ENCODE measurements at regions of chr1 and their contacts with region 1.

Region 1: GRCh38 chr1:200620273-200621131 is at the start of gene KIF14:
- DNase-seq: peak; percentile 63 to 92
- H3K4me3 ChIP-seq: peak within 1 kb of the TSS; percentile 84 to 94 (median 90)
- H3K27ac ChIP-seq: peak within 1 kb of the TSS; percentile 86
- H3K4me1 ChIP-seq: 0 out of 7 replicates have a peak, but pooled peaks cover 0 to 2% (median 0%) of the 10 kb centered on the region in 4 experiments
- H3K27me3 ChIP-seq: no peaks in the 10 kb centered on the region
- CTCF ChIP-seq: no peak
- EP300 ChIP-seq: peak in 1 of 2 experiments; percentile 66; a peak in 1 of 3 replicates
- POLR2A ChIP-seq: peak in 1 of 2 experiments; percentile 90; a peak in 2 of 3 replicates
- RAD21 ChIP-seq: no peak
- total RNA-seq, gene KIF14: 22.5 and 23.3 TPM in 2 replicates

Region 2: GRCh38 chr1:200473698-200474371 is 146.7 kb before region 1 on chr1:
- CTCF ChIA-PET with region 1: no interaction called
- POLR2A ChIA-PET with region 1: no interaction called
- DNase-seq: no peak
- H3K4me3 ChIP-seq: no peak overlapping the region
- H3K27ac ChIP-seq: no peak overlapping the region
- H3K4me1 ChIP-seq: no peaks in the 10 kb centered on the region
- H3K27me3 ChIP-seq: no peaks in the 10 kb centered on the region
- CTCF ChIP-seq: no peak
- EP300 ChIP-seq: no peak
- POLR2A ChIP-seq: no peak
- RAD21 ChIP-seq: no peak

Region 3: DNA sequence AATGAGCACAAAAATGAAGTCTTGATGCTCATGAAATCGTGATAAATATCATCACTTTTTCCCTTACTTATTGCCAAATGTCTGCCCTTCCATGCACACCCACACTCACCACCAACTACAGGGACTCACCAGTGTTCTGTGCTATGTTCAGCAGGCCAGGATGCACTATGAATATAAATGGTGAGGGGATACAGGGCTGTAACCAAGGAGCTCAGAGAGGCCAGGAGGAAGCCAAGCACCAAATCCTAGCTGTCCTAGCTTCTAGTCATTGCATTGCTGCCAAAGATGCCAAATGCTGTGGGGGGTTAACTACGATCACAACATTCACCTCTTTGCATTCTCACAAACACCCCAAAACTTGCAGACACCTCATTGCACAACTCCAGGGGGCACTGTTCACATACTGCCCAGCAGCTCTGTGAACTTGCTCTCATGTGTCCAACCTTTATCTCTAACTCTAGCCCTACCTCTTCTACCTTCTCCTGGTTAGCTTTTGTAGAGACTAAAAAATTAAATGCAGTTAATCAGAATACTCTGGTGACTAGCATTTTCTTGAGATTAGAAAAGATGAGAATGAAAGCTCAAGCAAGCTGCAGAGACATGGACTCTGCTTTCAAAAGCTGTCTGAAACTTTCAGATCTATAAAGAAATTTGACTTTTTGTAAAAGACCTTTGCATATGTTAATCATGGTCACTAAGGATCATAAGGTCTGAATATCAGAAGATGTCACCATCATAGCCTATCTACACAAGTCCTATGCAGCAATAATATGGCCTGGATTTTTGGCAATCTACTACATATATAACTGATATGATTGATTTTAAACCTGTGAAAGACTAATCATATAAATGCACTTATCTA is 14.0 kb after region 1 on chr1:
- CTCF ChIA-PET with region 1: interaction called, 28 read pairs
- POLR2A ChIA-PET with region 1: interaction called, 3 read pairs
- DNase-seq: no peak
- H3K4me3 ChIP-seq: no peak overlapping the region
- H3K27ac ChIP-seq: no peak overlapping the region
- H3K4me1 ChIP-seq: no peaks in the 10 kb centered on the region
- H3K27me3 ChIP-seq: no peaks in the 10 kb centered on the region
- CTCF ChIP-seq: peak; percentile 10 to 46 (median 28); a peak in 2 of 4 replicates
- EP300 ChIP-seq: no peak
- POLR2A ChIP-seq: no peak
- RAD21 ChIP-seq: peak; percentile 17 to 48; a peak in 2 of 4 replicates

Region 4: DNA sequence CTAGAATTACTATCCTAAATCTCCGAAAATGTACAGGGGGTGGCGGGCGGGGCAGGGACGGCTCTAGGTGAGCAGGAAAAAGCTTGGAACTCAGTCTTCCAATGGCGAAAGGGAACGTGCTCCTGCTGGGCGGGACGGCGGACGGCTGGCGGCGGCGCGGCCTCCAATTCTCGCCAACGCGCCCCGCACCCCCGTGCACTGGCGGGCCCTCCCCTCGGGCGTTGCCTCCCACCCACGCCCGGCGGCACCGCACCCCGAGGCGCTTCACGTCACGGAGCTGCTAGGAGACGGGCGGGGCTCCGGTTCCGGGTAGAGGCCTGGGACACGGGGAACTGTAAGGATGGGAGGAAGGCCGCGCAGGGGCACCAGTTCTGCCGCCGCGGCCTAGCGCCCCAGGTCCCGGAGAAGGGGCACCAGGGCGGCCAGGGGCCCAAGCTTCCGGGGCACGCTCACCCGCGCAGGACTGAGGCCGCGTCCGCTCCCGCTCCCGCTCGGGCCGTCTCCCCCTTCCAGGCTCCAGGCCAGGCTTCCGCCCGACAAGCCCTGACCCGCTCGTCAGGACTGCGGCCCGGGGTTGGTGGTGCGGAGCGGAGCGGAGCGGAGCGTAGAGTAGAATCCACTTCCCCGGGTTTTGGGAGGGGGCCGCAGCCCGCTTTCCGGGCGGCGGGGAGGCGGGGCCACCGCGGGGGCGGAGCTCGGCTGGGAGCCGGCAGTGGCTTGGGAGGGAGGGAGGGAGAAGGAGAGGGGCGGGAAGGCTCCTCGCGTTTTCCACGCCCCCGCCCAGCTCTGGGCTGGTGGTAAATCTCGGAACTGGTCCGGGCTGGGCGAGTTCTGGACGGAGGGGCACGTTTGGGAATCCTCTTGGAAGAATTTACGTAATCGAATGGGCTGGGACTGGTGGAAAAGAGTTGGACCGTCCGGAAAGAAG is 49.1 kb after region 1 on chr1 and contains the start of gene DDX59:
- CTCF ChIA-PET with region 1: interaction called, 14 read pairs
- POLR2A ChIA-PET with region 1: interaction called, 6 read pairs
- DNase-seq: peak; percentile 88 to 93
- H3K4me3 ChIP-seq: peak within 1 kb of the TSS; percentile 68 to 86 (median 78)
- H3K27ac ChIP-seq: peak within 1 kb of the TSS; percentile 93
- H3K4me1 ChIP-seq: peaks cover 0 to 8% (median 5%) of the 10 kb centered on the region in 4 experiments; a peak in 4 of 7 replicates
- H3K27me3 ChIP-seq: no peaks in the 10 kb centered on the region
- CTCF ChIP-seq: no peak
- EP300 ChIP-seq: no peak; a peak in 1 of 3 replicates
- POLR2A ChIP-seq: peak; percentile 81 to 89
- RAD21 ChIP-seq: no peak
- total RNA-seq, gene DDX59: 17.7 and 19.4 TPM in 2 replicates

Region 5: GRCh38 chr1:200738740-200739498 is 118.4 kb after region 1 on chr1 and contains the start of gene CAMSAP2:
- CTCF ChIA-PET with region 1: interaction called, 12 read pairs
- POLR2A ChIA-PET with region 1: interaction called, 3 read pairs
- DNase-seq: peak in 1 of 2 experiments; percentile 87
- H3K4me3 ChIP-seq: peak within 1 kb of the TSS; percentile 83 to 97 (median 94)
- H3K27ac ChIP-seq: peak within 1 kb of the TSS; percentile 86
- H3K4me1 ChIP-seq: peaks cover 0 to 12% (median 7%) of the 10 kb centered on the region in 4 experiments; a peak in 4 of 7 replicates
- H3K27me3 ChIP-seq: peaks cover 0 to 3% (median 1%) of the 10 kb centered on the region in 4 experiments; a peak in 3 of 7 replicates
- CTCF ChIP-seq: no peak
- EP300 ChIP-seq: peak in 1 of 2 experiments; percentile 38; a peak in 1 of 3 replicates
- POLR2A ChIP-seq: peak; percentile 36 to 91
- RAD21 ChIP-seq: no peak
- total RNA-seq, gene CAMSAP2: 27.6 and 28.9 TPM in 2 replicates

Region 6: DNA sequence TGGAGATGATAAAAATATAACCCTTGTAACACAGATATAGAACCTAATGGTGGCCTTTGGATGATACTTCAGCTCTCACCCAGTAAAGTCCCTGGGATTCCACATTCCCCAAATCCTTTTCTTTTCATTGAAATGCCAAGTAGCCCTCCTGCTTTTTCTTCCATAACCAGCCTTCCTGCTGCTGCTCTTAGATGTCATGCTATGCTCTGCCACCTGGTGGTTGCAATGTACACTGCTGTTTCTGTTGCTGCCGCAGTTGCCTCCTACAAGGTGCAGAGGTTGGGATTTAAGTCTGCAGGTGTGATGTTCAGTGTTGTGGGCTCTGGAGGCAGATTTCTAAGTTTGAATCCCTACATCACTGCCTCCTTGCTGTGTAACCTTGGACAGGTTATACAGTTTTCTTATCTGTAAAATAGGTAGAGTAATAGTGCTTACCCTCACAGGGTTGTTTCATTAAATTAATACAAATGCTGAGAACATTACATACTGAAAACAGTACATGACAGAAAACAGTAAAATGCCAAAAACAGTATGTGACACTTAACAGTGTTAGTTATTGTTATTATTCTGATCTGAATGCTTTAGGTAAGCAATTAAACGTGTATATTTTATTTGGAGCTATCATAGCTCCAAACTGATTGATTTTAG is 182.5 kb after region 1 on chr1:
- CTCF ChIA-PET with region 1: interaction called, 34 read pairs
- POLR2A ChIA-PET with region 1: interaction called, 3 read pairs
- DNase-seq: peak; percentile 84 to 87
- H3K4me3 ChIP-seq: peak overlapping the region in 1 of 4 experiments; percentile 21; a peak in 1 of 8 replicates
- H3K27ac ChIP-seq: no peak overlapping the region
- H3K4me1 ChIP-seq: 0 out of 7 replicates have a peak, but pooled peaks cover 0 to 2% (median 0%) of the 10 kb centered on the region in 4 experiments
- H3K27me3 ChIP-seq: no peaks in the 10 kb centered on the region
- CTCF ChIP-seq: peak; percentile 87 to 99 (median 90)
- EP300 ChIP-seq: no peak
- POLR2A ChIP-seq: no peak
- RAD21 ChIP-seq: peak; percentile 90 to 92

Region 7: DNA sequence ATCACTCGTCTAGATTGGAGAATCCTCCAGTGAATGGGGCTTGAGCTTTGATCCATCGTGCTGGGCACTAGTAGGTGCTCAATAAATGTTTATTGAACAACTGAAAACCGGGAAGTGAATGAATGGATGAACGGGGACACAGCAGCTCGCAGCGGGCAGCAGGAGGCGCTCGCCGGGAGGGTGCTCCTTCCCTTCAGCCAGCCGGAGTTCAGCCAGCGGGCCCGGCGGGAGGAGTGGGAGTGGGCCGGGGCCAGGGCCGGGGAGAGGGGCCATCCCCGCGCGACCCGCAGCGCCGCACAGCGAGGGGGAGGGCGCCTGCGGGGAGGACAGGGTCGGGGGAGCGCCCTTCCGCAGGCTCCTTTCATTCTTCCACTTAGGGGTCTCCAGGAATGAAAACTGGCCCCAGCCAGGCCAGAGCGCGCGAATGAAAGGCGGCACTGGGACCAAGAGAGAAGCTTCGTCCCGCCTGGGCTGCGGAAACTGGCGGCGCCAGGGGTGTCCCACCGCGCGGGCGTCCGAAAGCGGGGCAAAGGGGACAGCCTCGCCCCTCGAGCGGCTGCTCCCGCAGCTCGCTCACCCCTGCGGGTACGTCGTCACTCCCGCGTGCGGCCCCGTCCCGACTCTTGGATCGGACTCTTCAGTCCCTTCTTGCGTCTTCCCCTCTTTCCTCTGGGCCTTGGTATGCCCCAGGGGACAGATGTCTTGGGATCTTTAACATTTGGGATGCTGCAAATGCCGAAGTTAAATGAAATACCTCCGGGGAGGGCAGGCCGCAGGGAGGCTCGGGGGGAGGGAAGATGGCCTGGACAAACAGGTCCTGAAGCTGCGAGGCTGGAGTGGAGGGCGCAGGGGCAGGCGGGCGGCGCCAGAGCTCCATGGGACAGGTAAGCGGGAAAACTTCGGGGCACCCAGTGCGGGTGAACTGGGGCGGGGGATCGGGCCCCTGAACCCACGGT is 270.6 kb after region 1 on chr1:
- CTCF ChIA-PET with region 1: interaction called, 12 read pairs
- POLR2A ChIA-PET with region 1: interaction called, 17 read pairs
- DNase-seq: peak in 1 of 2 experiments; percentile 86
- H3K4me3 ChIP-seq: peak overlapping the region; percentile 67 to 90 (median 75)
- H3K27ac ChIP-seq: peak overlapping the region; percentile 99
- H3K4me1 ChIP-seq: peaks cover 15 to 49% (median 34%) of the 10 kb centered on the region in 4 experiments
- H3K27me3 ChIP-seq: no peaks in the 10 kb centered on the region
- CTCF ChIP-seq: peak; percentile 48 to 77 (median 73)
- EP300 ChIP-seq: peak in 1 of 2 experiments; percentile 96; a peak in 2 of 3 replicates
- POLR2A ChIP-seq: peak; percentile 58 to 82; a peak in 2 of 3 replicates
- RAD21 ChIP-seq: peak; percentile 42 to 53